ENCODE measurements at regions of chr22 and their contacts with region 1.

Region 1: DNA sequence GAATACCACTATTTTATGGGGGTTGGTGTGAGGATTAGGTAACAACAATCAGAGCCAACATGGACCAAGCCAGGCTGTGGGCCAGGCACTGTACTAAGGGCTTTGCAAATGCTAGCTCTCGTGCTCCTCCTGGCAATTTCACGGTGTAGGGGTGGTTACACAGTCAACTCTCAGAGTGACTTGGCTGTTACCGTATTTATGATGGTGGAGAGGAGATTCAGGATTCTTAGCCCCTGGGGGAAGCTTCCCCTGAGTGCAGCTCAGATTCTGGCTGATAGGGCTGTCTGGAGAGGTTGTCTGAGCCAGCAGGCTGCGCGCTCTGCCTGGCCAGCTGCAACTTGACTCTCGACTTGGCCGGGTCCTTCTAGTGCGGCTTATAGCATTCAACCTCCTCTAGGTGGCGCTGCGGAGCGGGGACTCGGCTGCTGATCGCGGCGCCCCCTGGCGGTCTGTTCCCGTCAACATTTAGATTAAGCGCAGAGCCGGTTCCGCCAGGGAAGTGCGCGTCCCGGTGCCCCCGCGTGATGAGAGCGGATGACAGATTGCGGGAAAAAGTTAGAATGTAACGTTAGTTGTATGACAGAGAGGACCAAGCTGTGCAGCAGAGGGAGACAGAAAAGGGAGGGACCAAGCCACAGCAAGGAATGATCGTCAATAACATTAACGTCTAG is 4.5 kb upstream of the NCF4 start:
- DNase-seq: no peak
- ATAC-seq: peak; percentile 55
- H3K4me3 ChIP-seq: no peak overlapping the region
- H3K27ac ChIP-seq: no peak overlapping the region
- H3K4me1 ChIP-seq: peaks cover 41% of the 10 kb centered on the region
- H3K27me3 ChIP-seq: no peaks in the 10 kb centered on the region
- CTCF ChIP-seq: peak; percentile 100; a peak in 5 of 6 replicates
- EP300 ChIP-seq: no peak
- POLR2A ChIP-seq: no peak
- RAD21 ChIP-seq: peak; percentile 90

Region 2: DNA sequence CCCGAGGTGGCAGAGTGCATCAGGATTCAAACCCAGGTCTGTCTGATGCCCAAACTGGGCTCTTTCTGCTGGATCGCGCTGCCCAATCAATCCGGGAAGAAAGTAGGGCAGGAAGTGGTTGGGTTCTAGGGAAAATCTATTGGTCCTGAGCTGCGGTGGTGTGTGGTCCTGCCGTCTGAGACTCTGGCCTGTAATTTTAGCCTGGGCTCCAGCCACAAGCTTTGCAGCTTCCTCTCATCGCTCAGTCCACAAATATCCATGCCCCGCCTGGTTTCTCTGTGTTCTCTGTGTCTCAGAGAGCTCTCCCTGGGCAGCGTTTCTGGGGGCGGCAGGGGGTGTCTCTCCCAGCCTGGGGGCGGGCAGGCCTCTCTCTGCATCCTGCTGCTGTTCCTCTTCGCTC is 171.4 kb before region 1 on chr22:
- CTCF ChIA-PET with region 1: no interaction called
- POLR2A ChIA-PET with region 1: no interaction called
- RAD21 ChIA-PET with region 1: no interaction called
- SMC1A ChIA-PET with region 1: no interaction called
- in situ Hi-C with region 1: no loop called
- intact Hi-C with region 1: no loop called
- DNase-seq: no peak
- ATAC-seq: no peak
- H3K4me3 ChIP-seq: no peak overlapping the region
- H3K27ac ChIP-seq: no peak overlapping the region
- H3K4me1 ChIP-seq: no peaks in the 10 kb centered on the region
- H3K27me3 ChIP-seq: peaks cover 2 to 6% of the 10 kb centered on the region in 2 experiments
- CTCF ChIP-seq: no peak
- EP300 ChIP-seq: no peak
- POLR2A ChIP-seq: no peak
- RAD21 ChIP-seq: no peak

Region 3: GRCh38 chr22:36775964-36776669 is 80.1 kb before region 1 on chr22 and contains the start of gene IFT27:
- CTCF ChIA-PET with region 1: interaction called, 109 read pairs
- POLR2A ChIA-PET with region 1: interaction called, 3 read pairs
- RAD21 ChIA-PET with region 1: interaction called, 6 read pairs
- SMC1A ChIA-PET with region 1: interaction called, 11 read pairs
- in situ Hi-C with region 1: no loop called
- intact Hi-C with region 1: no loop called
- DNase-seq: peak; percentile 99
- ATAC-seq: peak; percentile 97
- H3K4me3 ChIP-seq: peak within 1 kb of the TSS; percentile 87
- H3K27ac ChIP-seq: peak within 1 kb of the TSS; percentile 37; the same call in 1 of the 2 replicates
- H3K4me1 ChIP-seq: peaks cover 11% of the 10 kb centered on the region
- H3K27me3 ChIP-seq: no peaks in the 10 kb centered on the region
- CTCF ChIP-seq: no peak
- EP300 ChIP-seq: no peak
- POLR2A ChIP-seq: peak; percentile 82
- RAD21 ChIP-seq: no peak
- polyA plus RNA-seq, gene IFT27: 2.7 to 3.0 TPM

Region 4: GRCh38 chr22:36873680-36874537 is 17.7 kb after region 1 on chr22:
- CTCF ChIA-PET with region 1: interaction called, 21 read pairs
- POLR2A ChIA-PET with region 1: interaction called, 4 read pairs
- RAD21 ChIA-PET with region 1: interaction called, 14 read pairs
- SMC1A ChIA-PET with region 1: interaction called, 4 read pairs
- in situ Hi-C with region 1: no loop called
- intact Hi-C with region 1: no loop called
- DNase-seq: peak; percentile 69
- ATAC-seq: peak; percentile 96
- H3K4me3 ChIP-seq: no peak overlapping the region
- H3K27ac ChIP-seq: peak overlapping the region; percentile 59
- H3K4me1 ChIP-seq: peaks cover 16% of the 10 kb centered on the region
- H3K27me3 ChIP-seq: no peaks in the 10 kb centered on the region
- CTCF ChIP-seq: peak; percentile 55 to 64 (median 62)
- EP300 ChIP-seq: 0 out of 4 replicates have a peak, but pooled peaks have one; percentile 4 to 16
- POLR2A ChIP-seq: no peak
- RAD21 ChIP-seq: peak; percentile 63

Region 5: GRCh38 chr22:36907283-36908195 is 51.3 kb after region 1 on chr22:
- CTCF ChIA-PET with region 1: interaction called, 17 read pairs
- POLR2A ChIA-PET with region 1: interaction called, 51 read pairs
- RAD21 ChIA-PET with region 1: interaction called, 78 read pairs
- SMC1A ChIA-PET with region 1: interaction called, 72 read pairs
- in situ Hi-C with region 1: no loop called
- intact Hi-C with region 1: no loop called
- DNase-seq: no peak
- ATAC-seq: peak; percentile 78
- H3K4me3 ChIP-seq: no peak overlapping the region
- H3K27ac ChIP-seq: no peak overlapping the region
- H3K4me1 ChIP-seq: peaks cover 2% of the 10 kb centered on the region
- H3K27me3 ChIP-seq: no peaks in the 10 kb centered on the region
- CTCF ChIP-seq: no peak
- EP300 ChIP-seq: no peak
- POLR2A ChIP-seq: no peak
- RAD21 ChIP-seq: no peak

Region 6: DNA sequence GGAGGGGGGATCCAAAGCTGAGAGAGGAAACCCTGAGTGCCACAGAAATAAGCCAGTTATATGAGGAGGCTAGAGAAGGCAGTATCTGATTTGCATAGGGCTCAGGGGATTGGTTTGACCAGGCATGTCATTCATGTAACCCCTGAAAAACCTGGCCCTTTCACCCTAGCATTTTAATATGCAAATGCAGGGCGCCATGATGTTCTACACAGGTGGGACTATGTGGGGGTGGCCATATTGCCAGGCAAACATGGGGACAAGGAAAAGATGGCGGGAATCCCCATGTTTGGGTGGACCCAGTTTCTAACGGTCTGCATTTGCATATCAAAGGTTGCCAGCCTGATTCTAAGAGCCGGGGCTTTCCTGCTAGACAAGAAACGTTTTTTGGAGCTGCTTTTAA is 84.4 kb after region 1 on chr22:
- CTCF ChIA-PET with region 1: interaction called, 18 read pairs
- POLR2A ChIA-PET with region 1: interaction called, 13 read pairs
- RAD21 ChIA-PET with region 1: interaction called, 8 read pairs
- SMC1A ChIA-PET with region 1: interaction called, 13 read pairs
- in situ Hi-C with region 1: no loop called
- intact Hi-C with region 1: no loop called
- DNase-seq: peak; percentile 69
- ATAC-seq: peak; percentile 86
- H3K4me3 ChIP-seq: no peak overlapping the region
- H3K27ac ChIP-seq: peak overlapping the region; percentile 63; the same call in 1 of the 2 replicates
- H3K4me1 ChIP-seq: peaks cover 29% of the 10 kb centered on the region
- H3K27me3 ChIP-seq: no peaks in the 10 kb centered on the region
- CTCF ChIP-seq: no peak
- EP300 ChIP-seq: no peak
- POLR2A ChIP-seq: no peak
- RAD21 ChIP-seq: no peak

Region 7: DNA sequence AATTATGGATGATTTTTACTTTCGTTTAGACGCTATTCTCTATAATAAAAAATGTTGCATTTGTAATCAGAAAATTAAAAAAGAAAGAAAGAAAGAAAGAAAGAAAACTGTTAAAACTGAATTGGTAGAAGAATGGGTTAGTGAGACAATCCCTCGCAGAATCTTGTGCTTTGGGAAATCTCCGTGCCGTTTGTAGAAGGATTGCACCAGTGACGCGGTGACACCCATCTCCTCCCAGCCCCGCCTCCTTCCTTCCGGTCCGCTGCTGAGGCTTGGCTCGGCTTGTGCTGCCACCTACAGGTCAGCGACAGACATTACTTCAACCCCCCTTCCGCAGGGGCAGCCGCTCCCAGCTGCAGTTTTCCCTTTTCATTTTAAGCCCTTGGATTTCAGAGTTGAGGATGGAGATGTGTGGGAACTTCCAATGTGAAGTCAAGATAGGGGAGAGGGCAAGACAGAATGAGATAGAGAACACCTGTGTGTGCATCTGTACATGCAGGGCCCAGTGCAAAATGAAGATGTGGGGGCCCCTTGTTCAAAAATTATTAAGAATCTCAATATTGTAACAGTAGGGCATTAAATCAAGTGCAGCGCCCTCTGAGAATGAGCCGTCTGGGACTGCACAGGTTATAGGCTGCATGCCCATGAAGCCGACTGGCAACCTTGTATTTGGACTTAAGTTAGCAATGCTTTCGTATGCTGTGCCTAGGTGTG is 121.8 kb after region 1 on chr22:
- CTCF ChIA-PET with region 1: interaction called, 310 read pairs
- POLR2A ChIA-PET with region 1: interaction called, 16 read pairs
- RAD21 ChIA-PET with region 1: interaction called, 94 read pairs
- SMC1A ChIA-PET with region 1: interaction called, 32 read pairs
- in situ Hi-C with region 1: no loop called
- intact Hi-C with region 1: loop called (anchors 1 kb)
- DNase-seq: peak; percentile 57
- ATAC-seq: peak; percentile 90
- H3K4me3 ChIP-seq: peak overlapping the region; percentile 47; the same call in 1 of the 2 replicates
- H3K27ac ChIP-seq: peak overlapping the region; percentile 13; the same call in 1 of the 2 replicates
- H3K4me1 ChIP-seq: no peaks in the 10 kb centered on the region; the same call in 1 of the 2 replicates
- H3K27me3 ChIP-seq: no peaks in the 10 kb centered on the region; a peak in 1 of 4 replicates
- CTCF ChIP-seq: peak; percentile 84 to 99 (median 91)
- EP300 ChIP-seq: no peak
- POLR2A ChIP-seq: no peak; the same call in 1 of the 2 replicates
- RAD21 ChIP-seq: peak; percentile 90

Region 8: GRCh38 chr22:37244114-37244921 is 388.1 kb after region 1 on chr22 and contains the start of gene RAC2:
- CTCF ChIA-PET with region 1: no interaction called
- POLR2A ChIA-PET with region 1: interaction called, 5 read pairs
- RAD21 ChIA-PET with region 1: interaction called, 13 read pairs
- SMC1A ChIA-PET with region 1: no interaction called
- in situ Hi-C with region 1: no loop called
- intact Hi-C with region 1: no loop called
- DNase-seq: no peak
- ATAC-seq: peak; percentile 69
- H3K4me3 ChIP-seq: peak within 1 kb of the TSS; percentile 91
- H3K27ac ChIP-seq: peak within 1 kb of the TSS; percentile 96
- H3K4me1 ChIP-seq: peaks cover 49% of the 10 kb centered on the region
- H3K27me3 ChIP-seq: no peaks in the 10 kb centered on the region
- CTCF ChIP-seq: no peak
- EP300 ChIP-seq: 0 out of 4 replicates have a peak, but pooled peaks of 1 of the 2 experiments have one; percentile 37
- POLR2A ChIP-seq: peak; percentile 98
- RAD21 ChIP-seq: no peak
- polyA plus RNA-seq, gene RAC2: 102 to 108 TPM